Caco-2 (cell line): ENCODE measurements at regions of chr10 and their contacts with region 1.

Region 1: DNA sequence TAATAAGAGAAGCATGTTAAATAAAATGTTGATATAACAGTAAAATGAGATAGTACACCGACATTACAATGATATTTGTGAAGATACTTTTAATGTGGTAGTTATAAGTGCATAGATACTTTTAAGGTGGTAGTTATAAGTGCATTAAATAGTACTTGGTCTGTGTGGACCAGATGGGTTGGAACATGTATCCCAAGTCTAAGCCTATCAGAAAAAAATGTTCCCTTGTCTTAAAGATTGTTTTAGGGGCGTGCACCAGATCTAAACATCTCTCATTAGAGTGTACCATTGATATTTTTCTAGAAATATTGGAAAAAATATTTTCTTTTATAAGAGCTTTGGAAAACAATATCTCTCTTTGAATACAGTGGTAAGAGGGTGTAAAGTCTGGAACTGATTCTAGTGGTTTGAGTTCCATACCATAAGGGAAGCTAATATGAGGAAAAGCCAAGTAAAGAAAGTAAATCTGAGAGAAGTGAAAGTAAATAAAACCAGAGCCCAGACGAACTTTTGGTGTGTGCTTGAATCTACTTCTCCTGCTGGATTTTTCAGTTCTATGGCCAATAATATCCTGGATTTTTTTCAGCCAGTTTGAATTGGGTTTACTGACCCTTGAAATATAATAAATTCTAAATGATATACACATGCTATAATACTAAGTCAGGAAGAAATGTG is 175.3 kb downstream of the MBL2 start:
- DNase-seq: no peak
- H3K4me3 ChIP-seq: no peak overlapping the region
- H3K4me3 Mint-ChIP-seq: no peak overlapping the region
- H3K27ac Mint-ChIP-seq: no peak overlapping the region
- H3K4me1 ChIP-seq: peaks cover 5% of the 10 kb centered on the region; the same call in 1 of the 2 replicates
- H3K4me1 Mint-ChIP-seq: peaks cover 8% of the 10 kb centered on the region
- H3K27me3 ChIP-seq: no peaks in the 10 kb centered on the region
- H3K27me3 Mint-ChIP-seq: no peaks in the 10 kb centered on the region
- CTCF ChIP-seq: no peak

Region 2: GRCh38 chr10:52194191-52194590 is 403.1 kb before region 1 on chr10:
- CTCF ChIA-PET with region 1: no interaction called
- POLR2A ChIA-PET with region 1: no interaction called
- intact Hi-C with region 1: no loop called
- DNase-seq: no peak
- H3K4me3 ChIP-seq: no peak overlapping the region
- H3K4me3 Mint-ChIP-seq: no peak overlapping the region
- H3K27ac Mint-ChIP-seq: no peak overlapping the region
- H3K4me1 ChIP-seq: no peaks in the 10 kb centered on the region
- H3K4me1 Mint-ChIP-seq: no peaks in the 10 kb centered on the region
- H3K27me3 ChIP-seq: no peaks in the 10 kb centered on the region
- H3K27me3 Mint-ChIP-seq: no peaks in the 10 kb centered on the region
- CTCF ChIP-seq: no peak

Region 3: DNA sequence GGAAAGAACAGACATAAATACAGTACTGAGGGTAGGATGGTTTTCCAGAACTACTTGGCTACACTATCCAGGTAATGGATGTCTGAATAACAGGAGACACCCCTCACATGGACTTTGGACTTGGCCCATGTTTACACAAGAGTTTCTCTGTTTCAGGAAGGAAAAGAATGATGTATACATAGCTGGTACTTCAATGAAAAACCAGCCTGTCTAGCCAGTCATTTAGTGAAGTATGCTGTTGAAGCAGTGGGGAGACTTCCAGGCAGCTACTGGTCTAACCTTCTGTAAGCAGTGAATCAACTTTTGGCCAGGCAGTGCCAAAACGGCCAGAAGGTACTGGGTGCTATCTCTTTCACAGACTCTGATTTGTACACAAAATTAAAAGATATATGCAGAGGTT is 40.3 kb after region 1 on chr10:
- CTCF ChIA-PET with region 1: no interaction called
- POLR2A ChIA-PET with region 1: no interaction called
- intact Hi-C with region 1: loop called (anchors 2 kb)
- DNase-seq: peak; percentile 86 to 89
- H3K4me3 ChIP-seq: no peak overlapping the region
- H3K4me3 Mint-ChIP-seq: peak overlapping the region; percentile 14
- H3K27ac Mint-ChIP-seq: peak overlapping the region; percentile 57
- H3K4me1 ChIP-seq: peaks cover 34% of the 10 kb centered on the region
- H3K4me1 Mint-ChIP-seq: peaks cover 40% of the 10 kb centered on the region
- H3K27me3 ChIP-seq: no peaks in the 10 kb centered on the region
- H3K27me3 Mint-ChIP-seq: no peaks in the 10 kb centered on the region
- CTCF ChIP-seq: no peak

Region 4: GRCh38 chr10:52652431-52653262 is 55.3 kb after region 1 on chr10:
- CTCF ChIA-PET with region 1: no interaction called
- POLR2A ChIA-PET with region 1: no interaction called
- intact Hi-C with region 1: no loop called
- DNase-seq: no peak
- H3K4me3 ChIP-seq: no peak overlapping the region
- H3K4me3 Mint-ChIP-seq: no peak overlapping the region
- H3K27ac Mint-ChIP-seq: no peak overlapping the region
- H3K4me1 ChIP-seq: peaks cover 9% of the 10 kb centered on the region
- H3K4me1 Mint-ChIP-seq: peaks cover 15% of the 10 kb centered on the region
- H3K27me3 ChIP-seq: no peaks in the 10 kb centered on the region
- H3K27me3 Mint-ChIP-seq: no peaks in the 10 kb centered on the region
- CTCF ChIP-seq: no peak